B cell (primary cell): ENCODE measurements at regions of chr5 and their contacts with region 1.

Region 1: DNA sequence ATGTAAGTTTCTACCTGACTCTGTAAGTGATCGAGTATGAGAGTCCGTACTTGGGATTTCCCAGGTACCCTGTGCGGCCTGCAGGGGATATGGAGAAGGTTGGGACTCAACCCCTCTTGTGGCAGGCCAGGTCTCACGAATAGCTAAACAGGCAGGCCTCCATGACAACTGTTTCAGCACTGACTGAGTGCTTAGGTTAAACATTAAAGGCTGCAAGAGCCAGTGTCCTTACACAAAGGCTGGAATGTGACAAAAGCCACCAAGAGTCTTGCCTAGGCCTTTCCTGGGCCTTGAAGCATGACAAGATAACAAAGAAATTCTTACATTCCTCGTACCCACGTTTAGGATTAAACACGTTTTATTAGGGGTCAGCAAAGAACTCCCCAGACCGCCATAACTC is 58.6 kb downstream of the THBS4 start:
- DNase-seq: no peak
- ATAC-seq: no peak
- H3K4me3 ChIP-seq: no peak overlapping the region
- H3K4me3 Mint-ChIP-seq: no peak overlapping the region
- H3K27ac ChIP-seq: no peak overlapping the region
- H3K27ac Mint-ChIP-seq: no peak overlapping the region
- H3K4me1 ChIP-seq: no peaks in the 10 kb centered on the region
- H3K4me1 Mint-ChIP-seq: no peaks in the 10 kb centered on the region
- H3K27me3 ChIP-seq: no peaks in the 10 kb centered on the region
- H3K27me3 Mint-ChIP-seq: no peaks in the 10 kb centered on the region
- CTCF ChIP-seq: no peak

Region 2: GRCh38 chr5:79816014-79816413 is 277.8 kb before region 1 on chr5:
- CTCF ChIA-PET with region 1: no interaction called
- POLR2A ChIA-PET with region 1: no interaction called
- intact Hi-C with region 1: no loop called
- DNase-seq: no peak
- ATAC-seq: no peak
- H3K4me3 ChIP-seq: no peak overlapping the region
- H3K4me3 Mint-ChIP-seq: no peak overlapping the region
- H3K27ac ChIP-seq: no peak overlapping the region
- H3K27ac Mint-ChIP-seq: no peak overlapping the region
- H3K4me1 ChIP-seq: no peaks in the 10 kb centered on the region
- H3K4me1 Mint-ChIP-seq: no peaks in the 10 kb centered on the region
- H3K27me3 ChIP-seq: no peaks in the 10 kb centered on the region
- H3K27me3 Mint-ChIP-seq: peaks cover 16% of the 10 kb centered on the region
- CTCF ChIP-seq: no peak

Region 3: DNA sequence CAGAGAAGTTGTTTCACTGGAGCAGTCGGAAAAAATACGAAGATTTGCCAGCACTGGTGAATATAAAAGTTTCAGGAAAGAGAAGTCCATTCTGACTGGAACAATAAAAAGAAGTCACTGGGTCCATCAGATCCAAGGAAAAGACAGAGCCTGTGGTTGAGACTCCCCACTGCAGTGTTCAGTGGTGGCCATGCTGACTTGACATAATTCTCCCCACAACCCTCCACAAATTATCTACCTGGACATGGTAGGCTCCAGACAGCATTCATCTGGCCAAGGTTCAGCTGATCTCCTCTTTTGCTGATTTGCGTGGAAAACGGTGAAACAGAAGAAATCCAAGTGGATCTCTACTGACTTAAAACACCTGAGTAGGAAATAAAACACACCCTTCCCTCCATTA is 50.6 kb before region 1 on chr5:
- CTCF ChIA-PET with region 1: no interaction called
- POLR2A ChIA-PET with region 1: no interaction called
- intact Hi-C with region 1: no loop called
- DNase-seq: no peak
- ATAC-seq: no peak
- H3K4me3 ChIP-seq: no peak overlapping the region
- H3K4me3 Mint-ChIP-seq: no peak overlapping the region
- H3K27ac ChIP-seq: no peak overlapping the region
- H3K27ac Mint-ChIP-seq: no peak overlapping the region
- H3K4me1 ChIP-seq: no peaks in the 10 kb centered on the region
- H3K4me1 Mint-ChIP-seq: no peaks in the 10 kb centered on the region
- H3K27me3 ChIP-seq: peaks cover 0 to 20% (median 4%) of the 10 kb centered on the region in 4 experiments
- H3K27me3 Mint-ChIP-seq: peaks cover 47% of the 10 kb centered on the region
- CTCF ChIP-seq: no peak

Region 4: GRCh38 chr5:80198399-80198798 is 104.6 kb after region 1 on chr5:
- CTCF ChIA-PET with region 1: no interaction called
- POLR2A ChIA-PET with region 1: no interaction called
- intact Hi-C with region 1: no loop called
- DNase-seq: no peak
- ATAC-seq: no peak
- H3K4me3 ChIP-seq: no peak overlapping the region
- H3K4me3 Mint-ChIP-seq: no peak overlapping the region
- H3K27ac ChIP-seq: no peak overlapping the region
- H3K27ac Mint-ChIP-seq: no peak overlapping the region
- H3K4me1 ChIP-seq: no peaks in the 10 kb centered on the region
- H3K4me1 Mint-ChIP-seq: peaks cover 7% of the 10 kb centered on the region
- H3K27me3 ChIP-seq: no peaks in the 10 kb centered on the region
- H3K27me3 Mint-ChIP-seq: no peaks in the 10 kb centered on the region
- CTCF ChIP-seq: no peak

Region 5: DNA sequence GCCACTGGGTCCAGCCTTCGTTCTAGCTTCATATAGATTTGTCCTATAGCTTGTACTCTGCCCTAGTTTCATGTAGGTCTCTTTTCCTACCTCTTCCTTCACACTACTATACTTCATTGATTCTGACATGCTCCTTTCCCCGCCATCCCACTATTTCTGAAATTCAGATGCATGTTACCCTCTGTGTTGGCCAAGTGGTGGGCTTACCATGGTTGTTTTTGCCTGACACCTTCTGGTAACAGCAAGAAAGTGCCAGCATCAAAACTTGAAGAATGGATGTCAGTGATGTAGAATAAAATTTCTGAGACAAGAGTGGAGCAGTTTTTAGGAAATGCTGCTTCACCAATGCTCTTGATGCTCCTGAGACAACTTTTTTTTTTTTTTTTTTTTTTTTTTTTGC is 181.6 kb after region 1 on chr5:
- CTCF ChIA-PET with region 1: interaction called, 52 read pairs
- POLR2A ChIA-PET with region 1: no interaction called
- intact Hi-C with region 1: no loop called
- DNase-seq: no peak
- ATAC-seq: no peak
- H3K4me3 ChIP-seq: no peak overlapping the region
- H3K4me3 Mint-ChIP-seq: no peak overlapping the region
- H3K27ac ChIP-seq: no peak overlapping the region
- H3K27ac Mint-ChIP-seq: no peak overlapping the region
- H3K4me1 ChIP-seq: peaks cover under 1 to 3% of the 10 kb centered on the region in 2 donors
- H3K4me1 Mint-ChIP-seq: peaks cover under 1% of the 10 kb centered on the region
- H3K27me3 ChIP-seq: no peaks in the 10 kb centered on the region
- H3K27me3 Mint-ChIP-seq: peaks cover 4% of the 10 kb centered on the region
- CTCF ChIP-seq: no peak

Region 6: GRCh38 chr5:80308526-80308925 is 214.7 kb after region 1 on chr5:
- CTCF ChIA-PET with region 1: interaction called, 388 read pairs
- POLR2A ChIA-PET with region 1: interaction called, 3 read pairs
- intact Hi-C with region 1: no loop called
- DNase-seq: no peak
- ATAC-seq: no peak
- H3K4me3 ChIP-seq: no peak overlapping the region
- H3K4me3 Mint-ChIP-seq: no peak overlapping the region
- H3K27ac ChIP-seq: no peak overlapping the region
- H3K27ac Mint-ChIP-seq: no peak overlapping the region
- H3K4me1 ChIP-seq: no peaks in the 10 kb centered on the region
- H3K4me1 Mint-ChIP-seq: no peaks in the 10 kb centered on the region
- H3K27me3 ChIP-seq: no peaks in the 10 kb centered on the region
- H3K27me3 Mint-ChIP-seq: no peaks in the 10 kb centered on the region
- CTCF ChIP-seq: no peak

Region 7: DNA sequence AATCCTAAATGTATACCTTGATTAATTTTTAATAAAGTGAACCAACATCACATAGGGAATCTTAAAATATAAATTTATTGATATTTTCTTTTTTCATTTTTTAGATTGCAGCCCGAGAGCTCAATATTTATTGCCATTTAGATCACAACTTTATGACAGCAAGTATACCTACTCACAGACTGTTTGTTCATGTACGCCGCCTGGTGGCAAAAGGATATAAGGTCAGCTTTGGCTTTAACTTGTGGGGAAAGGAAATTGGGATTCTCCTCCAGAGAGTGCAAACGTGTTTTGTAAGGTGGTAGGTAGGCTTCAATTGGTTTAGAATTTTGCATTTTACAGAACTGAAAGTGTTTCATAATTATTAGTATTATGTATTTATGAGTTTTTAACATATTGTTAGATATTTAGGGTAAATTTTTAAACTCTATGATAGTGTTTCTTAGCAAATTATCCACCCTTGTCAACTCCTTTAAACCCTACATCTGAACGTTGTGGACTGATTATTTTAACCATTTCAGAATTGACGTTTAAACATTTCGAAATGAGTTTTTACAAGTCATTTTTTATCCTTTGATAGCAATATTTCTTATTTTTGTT is 578.4 kb after region 1 on chr5:
- CTCF ChIA-PET with region 1: interaction called, 14 read pairs
- POLR2A ChIA-PET with region 1: no interaction called
- intact Hi-C with region 1: no loop called
- DNase-seq: peak; percentile 65
- ATAC-seq: peak; percentile 48
- H3K4me3 ChIP-seq: no peak overlapping the region
- H3K4me3 Mint-ChIP-seq: no peak overlapping the region
- H3K27ac ChIP-seq: no peak overlapping the region
- H3K27ac Mint-ChIP-seq: no peak overlapping the region
- H3K4me1 ChIP-seq: peaks cover 5 to 13% of the 10 kb centered on the region in 2 donors
- H3K4me1 Mint-ChIP-seq: peaks cover 14% of the 10 kb centered on the region
- H3K27me3 ChIP-seq: no peaks in the 10 kb centered on the region
- H3K27me3 Mint-ChIP-seq: no peaks in the 10 kb centered on the region
- CTCF ChIP-seq: peak; percentile 94